ENCODE measurements at regions of chr18 and their contacts with region 1.

Region 1: DNA sequence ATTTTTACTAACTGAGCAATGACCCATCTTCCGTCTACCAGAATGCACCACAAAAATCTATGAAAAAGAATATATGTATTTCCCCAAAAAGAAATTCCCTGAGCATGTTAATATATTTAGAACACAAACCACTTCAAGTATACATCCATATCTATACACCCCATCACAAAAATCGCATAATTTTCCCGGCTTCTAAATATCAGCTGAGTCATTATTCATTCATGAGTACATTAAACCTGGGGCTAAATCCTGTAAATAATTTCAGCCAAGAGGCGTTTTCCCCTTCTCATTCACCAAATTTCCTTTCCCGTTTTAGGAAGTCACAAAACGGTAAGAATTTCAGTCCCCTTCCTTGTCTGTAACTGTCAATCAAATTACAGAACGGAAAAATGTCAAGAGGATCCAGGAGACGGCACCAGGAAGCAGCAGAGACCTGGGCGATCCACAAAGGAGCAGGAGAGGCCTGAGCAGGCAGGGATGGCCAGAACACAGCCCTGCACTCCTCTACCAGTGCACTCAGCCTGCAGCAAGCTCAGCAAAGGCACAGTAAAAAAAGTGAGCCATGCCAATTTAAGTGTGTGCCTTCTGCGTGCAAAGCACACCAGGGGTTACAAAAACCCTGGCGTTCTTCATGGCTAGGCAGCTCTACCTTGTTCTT is 300.7 kb downstream of the TCF4 start:
- DNase-seq: peak; percentile 21
- H3K4me3 ChIP-seq: no peak overlapping the region
- H3K27ac ChIP-seq: no peak overlapping the region
- H3K4me1 ChIP-seq: peaks cover 13% of the 10 kb centered on the region
- H3K27me3 ChIP-seq: no peaks in the 10 kb centered on the region
- CTCF ChIP-seq: no peak
- POLR2A ChIP-seq: no peak

Region 2: DNA sequence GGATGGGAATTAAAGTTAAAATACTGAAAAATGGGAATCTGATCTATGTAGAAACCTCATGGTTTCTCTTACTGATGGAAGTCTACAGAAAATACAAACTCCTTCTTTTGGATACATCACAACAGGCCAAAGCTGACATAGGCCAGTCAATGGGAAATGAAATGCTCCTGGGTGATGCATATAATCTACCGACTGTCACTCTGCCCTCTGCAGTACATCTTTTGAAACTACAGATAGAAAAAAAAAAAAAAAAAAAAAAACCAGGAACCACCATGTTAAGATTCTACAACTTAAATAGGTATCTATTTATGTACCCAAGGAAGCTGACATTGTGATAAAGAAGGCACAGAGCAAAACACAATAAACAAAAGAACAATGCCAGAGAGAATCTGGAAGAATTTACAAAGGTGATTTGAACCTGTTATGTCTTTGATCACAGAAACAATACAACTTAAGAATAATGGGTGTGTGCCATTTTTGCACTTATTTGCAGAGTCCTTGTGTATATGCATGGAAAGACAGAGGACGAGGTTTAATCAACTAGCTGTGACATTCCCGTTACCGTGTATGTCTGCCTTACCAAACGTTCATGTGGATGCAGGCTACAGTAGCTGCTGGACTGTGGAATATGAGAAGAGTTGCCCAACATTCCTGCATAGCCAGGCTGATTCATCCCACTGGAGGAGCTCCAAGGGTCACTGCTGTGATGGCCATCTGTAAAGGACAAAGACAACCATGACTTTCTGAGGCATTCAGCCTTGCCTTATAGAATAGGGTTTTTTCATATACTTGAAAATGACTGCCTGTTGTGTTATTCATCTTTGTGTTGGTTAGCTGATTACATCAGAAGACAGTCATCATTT is 12.0 kb before region 1 on chr18:
- CTCF ChIA-PET with region 1: interaction called, 15 read pairs
- POLR2A ChIA-PET with region 1: no interaction called
- dilution Hi-C with region 1: no loop called
- intact Hi-C with region 1: no loop called
- DNase-seq: peak; percentile 28
- H3K4me3 ChIP-seq: no peak overlapping the region
- H3K27ac ChIP-seq: no peak overlapping the region
- H3K4me1 ChIP-seq: peaks cover 13% of the 10 kb centered on the region
- H3K27me3 ChIP-seq: no peaks in the 10 kb centered on the region
- CTCF ChIP-seq: no peak
- POLR2A ChIP-seq: no peak

Region 3: GRCh38 chr18:55435592-55435991 is 148.3 kb after region 1 on chr18:
- CTCF ChIA-PET with region 1: no interaction called
- POLR2A ChIA-PET with region 1: no interaction called
- dilution Hi-C with region 1: no loop called
- intact Hi-C with region 1: no loop called
- DNase-seq: no peak
- H3K4me3 ChIP-seq: no peak overlapping the region
- H3K27ac ChIP-seq: no peak overlapping the region
- H3K4me1 ChIP-seq: no peaks in the 10 kb centered on the region
- H3K27me3 ChIP-seq: no peaks in the 10 kb centered on the region
- CTCF ChIP-seq: no peak
- POLR2A ChIP-seq: no peak

Measured in endothelial cell of umbilical vein (primary cell).